CD8-positive, alpha-beta T cell (primary cell): ENCODE measurements at regions of chr4 and their contacts with region 1.

Region 1: GRCh38 chr4:47485047-47485692 is at the start of gene ATP10D:
- DNase-seq: peak; percentile 39 to 88 (median 74)
- ATAC-seq: peak; percentile 91
- H3K4me3 ChIP-seq: peak within 1 kb of the TSS; percentile 63 to 85
- H3K4me3 Mint-ChIP-seq: peak within 1 kb of the TSS; percentile 95
- H3K27ac ChIP-seq: peak within 1 kb of the TSS; percentile 68 to 83
- H3K27ac Mint-ChIP-seq: peak within 1 kb of the TSS; percentile 93
- H3K4me1 ChIP-seq: peaks cover 9% of the 10 kb centered on the region
- H3K4me1 Mint-ChIP-seq: peaks cover 30% of the 10 kb centered on the region
- H3K27me3 ChIP-seq: no peaks in the 10 kb centered on the region
- H3K27me3 Mint-ChIP-seq: no peaks in the 10 kb centered on the region
- CTCF ChIP-seq: no peak
- total RNA-seq, gene ATP10D: 2.3 to 2.4 TPM

Region 2: DNA sequence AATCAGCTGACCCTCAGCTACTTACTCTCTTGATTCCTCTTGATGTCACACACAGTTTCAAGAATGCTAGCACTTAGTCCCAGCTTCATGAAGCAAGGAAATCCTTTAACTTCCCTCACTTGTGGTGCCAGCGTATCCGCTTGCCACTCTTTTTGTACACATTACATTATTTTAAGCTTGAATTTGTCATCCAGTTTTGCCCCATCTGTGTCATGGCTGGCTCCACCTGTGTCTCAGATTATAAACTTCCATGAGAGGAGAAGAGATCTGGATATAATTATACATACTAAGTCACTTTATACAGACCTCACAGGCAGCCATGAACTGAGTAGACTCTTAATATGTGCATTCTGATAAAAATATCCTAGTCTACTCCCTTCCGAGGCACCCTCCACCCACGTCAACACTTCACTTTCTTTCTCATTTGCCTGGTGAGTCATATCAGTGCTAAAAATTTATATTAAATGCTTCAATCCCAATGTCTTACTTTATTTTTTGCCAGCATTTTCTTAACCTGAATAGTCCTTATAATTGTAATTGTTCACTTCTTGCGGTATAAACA is 1130.4 kb before region 1 on chr4:
- CTCF ChIA-PET with region 1: no interaction called
- POLR2A ChIA-PET with region 1: no interaction called
- intact Hi-C with region 1: no loop called
- DNase-seq: no peak
- ATAC-seq: no peak
- H3K4me3 ChIP-seq: no peak overlapping the region
- H3K4me3 Mint-ChIP-seq: no peak overlapping the region
- H3K27ac ChIP-seq: no peak overlapping the region
- H3K27ac Mint-ChIP-seq: no peak overlapping the region
- H3K4me1 ChIP-seq: no peaks in the 10 kb centered on the region
- H3K4me1 Mint-ChIP-seq: no peaks in the 10 kb centered on the region
- H3K27me3 ChIP-seq: no peaks in the 10 kb centered on the region
- H3K27me3 Mint-ChIP-seq: no peaks in the 10 kb centered on the region
- CTCF ChIP-seq: no peak

Region 3: DNA sequence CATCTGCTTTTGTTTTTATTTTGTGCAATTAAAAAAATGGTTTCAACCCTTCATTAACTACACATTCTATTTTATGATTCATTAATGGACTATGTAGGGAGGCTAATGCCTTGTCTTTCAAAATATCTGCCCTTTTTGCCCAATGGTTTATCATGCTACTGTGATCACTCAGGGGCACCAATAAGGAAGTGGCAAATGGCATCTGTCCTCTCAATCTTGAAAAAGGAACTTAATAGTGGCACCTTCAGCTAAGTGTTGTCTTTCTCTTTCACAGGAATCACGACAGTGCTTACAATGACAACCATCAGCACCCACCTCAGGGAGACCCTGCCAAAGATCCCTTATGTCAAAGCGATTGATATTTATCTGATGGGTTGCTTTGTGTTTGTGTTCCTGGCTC is 78.8 kb before region 1 on chr4:
- CTCF ChIA-PET with region 1: no interaction called
- POLR2A ChIA-PET with region 1: no interaction called
- intact Hi-C with region 1: no loop called
- DNase-seq: no peak
- ATAC-seq: no peak
- H3K4me3 ChIP-seq: no peak overlapping the region
- H3K4me3 Mint-ChIP-seq: no peak overlapping the region
- H3K27ac ChIP-seq: no peak overlapping the region
- H3K27ac Mint-ChIP-seq: no peak overlapping the region
- H3K4me1 ChIP-seq: no peaks in the 10 kb centered on the region
- H3K4me1 Mint-ChIP-seq: no peaks in the 10 kb centered on the region
- H3K27me3 ChIP-seq: no peaks in the 10 kb centered on the region
- H3K27me3 Mint-ChIP-seq: peaks cover 15% of the 10 kb centered on the region
- CTCF ChIP-seq: no peak

Region 4: GRCh38 chr4:47531954-47532321 is 46.8 kb after region 1 on chr4:
- CTCF ChIA-PET with region 1: no interaction called
- POLR2A ChIA-PET with region 1: interaction called, 4 read pairs
- intact Hi-C with region 1: loop called in 1 of 2 experiments (anchors 2 kb)
- DNase-seq: peak in 1 of 9 experiments; percentile 48
- ATAC-seq: no peak
- H3K4me3 ChIP-seq: no peak overlapping the region
- H3K4me3 Mint-ChIP-seq: peak overlapping the region; percentile 57
- H3K27ac ChIP-seq: peak overlapping the region in 1 of 2 experiments; percentile 69
- H3K27ac Mint-ChIP-seq: peak overlapping the region; percentile 55
- H3K4me1 ChIP-seq: peaks cover 25% of the 10 kb centered on the region
- H3K4me1 Mint-ChIP-seq: peaks cover 46% of the 10 kb centered on the region
- H3K27me3 ChIP-seq: no peaks in the 10 kb centered on the region
- H3K27me3 Mint-ChIP-seq: no peaks in the 10 kb centered on the region
- CTCF ChIP-seq: no peak